Head of caudate nucleus (tissue), 42 donors: ENCODE measurements at regions of chr9 and their contacts with region 1.

Region 1: GRCh38 chr9:2132484-2133082 is 117.4 kb downstream of the SMARCA2 start:
- DNase-seq: peak in 1 of 42 donors; percentile 29

Region 2: GRCh38 chr9:2151171-2151570 is 18.6 kb after region 1 on chr9:
- intact Hi-C with region 1: no loop called
- DNase-seq: no peak

Region 3: GRCh38 chr9:2662496-2662895 is 529.9 kb after region 1 on chr9:
- intact Hi-C with region 1: loop called (anchors 10 kb)
- DNase-seq: peak in 40 of 42 donors; percentile 11 to 85 (median 62)